ENCODE measurements at regions of chr15 and their contacts with region 1.

Region 1: DNA sequence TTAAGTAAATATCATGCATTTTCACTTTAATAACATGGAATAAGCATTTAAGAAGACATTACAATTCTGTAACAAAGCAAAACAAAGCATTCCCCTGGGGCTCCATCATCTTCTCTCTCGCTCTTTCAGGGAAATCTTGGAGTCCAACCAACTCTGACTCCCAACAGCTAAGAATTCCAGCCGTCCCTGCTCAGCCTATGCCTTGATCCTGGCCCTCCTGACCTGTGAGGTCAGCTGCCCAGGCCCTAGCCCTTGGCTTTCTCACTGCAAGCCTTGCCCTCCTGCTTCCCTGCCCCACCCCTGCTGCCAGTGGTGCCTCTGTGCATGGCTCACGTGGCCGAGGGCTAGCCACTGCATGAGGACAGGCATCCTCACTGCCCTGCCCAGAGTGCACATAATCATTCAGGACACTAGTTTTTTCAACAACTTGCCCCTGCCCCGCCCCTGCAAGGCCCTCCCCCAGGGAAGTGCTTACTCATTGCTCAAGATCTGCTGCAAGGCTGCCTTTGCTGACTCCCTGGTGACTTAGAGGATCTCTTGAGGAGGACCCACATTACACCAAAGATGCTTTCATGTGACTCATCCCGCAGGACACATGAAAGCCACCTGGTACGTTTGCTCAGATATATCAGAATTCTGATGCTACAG is 37.6 kb downstream of the MTMR10 start:
- DNase-seq: no peak
- H3K4me3 Mint-ChIP-seq: no peak overlapping the region
- H3K27ac Mint-ChIP-seq: peak overlapping the region; percentile 34
- H3K4me1 Mint-ChIP-seq: peaks cover 4% of the 10 kb centered on the region
- H3K27me3 Mint-ChIP-seq: no peaks in the 10 kb centered on the region

Region 2: GRCh38 chr15:30922480-30923311 is 31.2 kb before region 1 on chr15:
- intact Hi-C with region 1: no loop called
- DNase-seq: no peak
- H3K4me3 Mint-ChIP-seq: no peak overlapping the region
- H3K27ac Mint-ChIP-seq: no peak overlapping the region
- H3K4me1 Mint-ChIP-seq: no peaks in the 10 kb centered on the region
- H3K27me3 Mint-ChIP-seq: no peaks in the 10 kb centered on the region

Region 3: DNA sequence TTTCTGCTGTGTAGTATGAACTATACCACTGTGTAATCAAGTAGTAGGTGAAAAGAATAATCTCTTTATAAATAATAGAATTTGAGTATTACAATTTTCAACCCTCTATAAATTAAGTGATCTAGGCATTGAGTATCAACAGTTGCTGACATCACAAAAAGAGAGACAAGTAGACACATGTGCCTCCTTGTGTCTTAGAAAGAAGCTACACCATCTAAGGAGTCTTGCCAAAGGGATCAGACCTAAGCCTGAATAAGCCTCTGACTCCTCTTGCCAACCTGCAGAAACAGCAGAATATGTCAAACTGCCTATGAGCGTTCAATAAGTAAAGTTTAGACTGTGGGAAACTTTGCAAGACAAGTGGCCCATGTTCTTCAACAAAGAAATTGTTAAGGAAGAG is 43.4 kb after region 1 on chr15:
- intact Hi-C with region 1: loop called (anchors 5 kb)
- DNase-seq: no peak
- H3K4me3 Mint-ChIP-seq: no peak overlapping the region
- H3K27ac Mint-ChIP-seq: no peak overlapping the region
- H3K4me1 Mint-ChIP-seq: peaks cover 1% of the 10 kb centered on the region
- H3K27me3 Mint-ChIP-seq: peaks cover 29% of the 10 kb centered on the region